GM18951 (cell line): ENCODE measurements at regions of chr6 and their contacts with region 1.

Region 1: GRCh38 chr6:111297776-111298175 is 185.2 kb downstream of the REV3L start:
- POLR2A ChIP-seq: no peak

Region 2: GRCh38 chr6:110682460-110682853 is 615.3 kb before region 1 on chr6:
- in situ Hi-C with region 1: no loop called
- POLR2A ChIP-seq: no peak

Region 3: DNA sequence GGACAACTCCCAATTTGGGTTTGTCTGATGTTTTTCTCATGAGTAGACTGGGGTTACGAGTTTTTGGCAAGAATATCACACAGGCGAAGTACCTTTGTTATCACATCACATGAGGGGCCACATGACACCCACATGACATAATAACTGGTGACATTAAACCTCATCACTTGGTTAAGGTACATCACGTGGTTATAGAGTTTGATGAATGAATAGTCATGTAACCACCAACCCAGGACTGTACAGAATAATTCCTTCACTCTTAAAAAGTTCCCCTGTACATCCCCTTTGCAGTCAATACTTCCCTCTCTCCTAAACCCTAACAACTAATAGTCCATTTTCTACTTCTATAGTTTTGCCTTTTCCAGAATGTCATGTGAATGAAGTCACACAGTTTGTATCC is 101.8 kb after region 1 on chr6:
- in situ Hi-C with region 1: loop called (anchors 5 kb)
- POLR2A ChIP-seq: no peak

Region 4: GRCh38 chr6:112010328-112010727 is 712.6 kb after region 1 on chr6:
- in situ Hi-C with region 1: no loop called
- POLR2A ChIP-seq: no peak